MCF 10A (cell line): ENCODE measurements at regions of chr1 and their contacts with region 1.

Region 1: DNA sequence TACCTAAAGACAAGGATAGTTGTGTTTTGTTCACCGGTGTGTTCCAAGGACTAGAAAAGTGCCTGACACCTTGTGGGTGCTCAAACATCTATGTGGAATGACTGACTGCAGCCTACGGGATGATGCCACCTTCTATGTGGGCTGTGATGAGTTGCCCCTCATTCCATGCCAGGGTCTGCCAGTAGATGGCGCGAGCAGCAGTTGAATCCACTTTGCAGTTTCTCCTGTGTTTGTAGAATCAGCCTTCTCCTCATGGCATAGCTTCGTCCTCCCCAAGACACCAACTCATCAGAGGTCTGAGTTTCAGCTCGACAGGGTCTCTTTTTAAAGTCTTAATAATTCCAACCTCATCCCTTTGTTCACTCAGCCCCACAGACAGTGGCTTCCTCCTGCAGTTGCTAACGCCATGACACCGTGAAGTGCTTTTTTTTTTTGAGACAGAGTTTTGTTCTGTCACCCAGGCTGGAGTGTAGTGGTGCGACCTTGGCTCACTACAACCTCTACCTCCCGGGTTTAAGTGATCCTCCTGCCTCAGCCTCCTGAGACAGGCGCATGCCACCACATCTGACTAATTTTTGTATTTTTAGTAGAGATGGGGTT is 133.7 kb downstream of the CAPN8 start:
- DNase-seq: peak; percentile 87
- H3K4me3 Mint-ChIP-seq: no peak overlapping the region
- H3K27ac Mint-ChIP-seq: no peak overlapping the region
- H3K4me1 Mint-ChIP-seq: no peaks in the 10 kb centered on the region
- H3K27me3 Mint-ChIP-seq: peaks cover 24% of the 10 kb centered on the region
- CTCF ChIP-seq: peak; percentile 90

Region 2: GRCh38 chr1:223083831-223084230 is 448.0 kb before region 1 on chr1:
- CTCF ChIA-PET with region 1: no interaction called
- POLR2A ChIA-PET with region 1: no interaction called
- intact Hi-C with region 1: no loop called
- DNase-seq: no peak
- H3K4me3 Mint-ChIP-seq: no peak overlapping the region
- H3K27ac Mint-ChIP-seq: no peak overlapping the region
- H3K4me1 Mint-ChIP-seq: no peaks in the 10 kb centered on the region
- H3K27me3 Mint-ChIP-seq: peaks cover 40% of the 10 kb centered on the region
- CTCF ChIP-seq: no peak

Region 3: GRCh38 chr1:223437151-223437550 is 94.7 kb before region 1 on chr1:
- CTCF ChIA-PET with region 1: no interaction called
- POLR2A ChIA-PET with region 1: no interaction called
- intact Hi-C with region 1: no loop called
- DNase-seq: no peak
- H3K4me3 Mint-ChIP-seq: no peak overlapping the region
- H3K27ac Mint-ChIP-seq: no peak overlapping the region
- H3K4me1 Mint-ChIP-seq: no peaks in the 10 kb centered on the region
- H3K27me3 Mint-ChIP-seq: peaks cover 20% of the 10 kb centered on the region
- CTCF ChIP-seq: no peak

Region 4: GRCh38 chr1:223670458-223671168 is 138.8 kb after region 1 on chr1:
- CTCF ChIA-PET with region 1: interaction called, 7 read pairs
- POLR2A ChIA-PET with region 1: no interaction called
- intact Hi-C with region 1: loop called (anchors 1 kb)
- DNase-seq: peak; percentile 87
- H3K4me3 Mint-ChIP-seq: no peak overlapping the region
- H3K27ac Mint-ChIP-seq: no peak overlapping the region
- H3K4me1 Mint-ChIP-seq: peaks cover 22% of the 10 kb centered on the region
- H3K27me3 Mint-ChIP-seq: no peaks in the 10 kb centered on the region
- CTCF ChIP-seq: peak; percentile 97